RWPE1 (cell line): ENCODE measurements at regions of chr17 and their contacts with region 1.

Region 1: GRCh38 chr17:34242587-34243363 is 12.3 kb upstream of the CCL2 start:
- DNase-seq: no peak
- H3K27ac ChIP-seq: no peak overlapping the region
- CTCF ChIP-seq: no peak

Region 2: DNA sequence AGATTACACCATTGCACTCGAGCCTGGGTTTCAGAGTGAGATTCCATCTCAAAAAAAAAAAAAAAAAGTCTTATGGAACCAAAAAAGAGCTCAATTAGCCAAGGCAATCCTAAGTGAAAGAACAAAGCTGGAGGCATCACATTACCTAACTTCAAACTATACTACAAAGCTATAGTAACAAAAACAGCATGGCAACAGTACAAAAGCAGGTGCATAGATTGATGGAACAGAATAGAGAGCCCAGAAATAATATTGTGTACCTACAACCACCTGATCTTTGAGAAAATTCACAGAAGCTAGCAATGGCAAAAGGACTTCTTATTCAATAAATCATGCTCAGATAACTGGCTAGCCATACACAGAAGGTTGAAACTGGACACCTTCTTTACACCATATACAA is 12.4 kb before region 1 on chr17:
- CTCF ChIA-PET with region 1: interaction called, 10 read pairs
- POLR2A ChIA-PET with region 1: no interaction called
- DNase-seq: no peak
- H3K27ac ChIP-seq: no peak overlapping the region
- CTCF ChIP-seq: no peak

Region 3: GRCh38 chr17:34275881-34276280 is 33.1 kb after region 1 on chr17:
- CTCF ChIA-PET with region 1: no interaction called
- POLR2A ChIA-PET with region 1: no interaction called
- DNase-seq: peak; percentile 35
- H3K27ac ChIP-seq: no peak overlapping the region
- CTCF ChIP-seq: no peak